Common myeloid progenitor, CD34-positive (primary cell): ENCODE measurements at regions of chr4 and their contacts with region 1.

Region 1: GRCh38 chr4:56977321-56978012 is at the start of gene NOA1:
- DNase-seq: peak; percentile 99 to 100 (median 99)
- H3K4me3 ChIP-seq: peak within 1 kb of the TSS; percentile 82 to 100 (median 93)
- H3K27ac ChIP-seq: peak within 1 kb of the TSS; percentile 88 to 93
- H3K4me1 ChIP-seq: peaks cover 8 to 42% (median 27%) of the 10 kb centered on the region in 4 experiments
- H3K27me3 ChIP-seq: no peaks in the 10 kb centered on the region

Region 2: DNA sequence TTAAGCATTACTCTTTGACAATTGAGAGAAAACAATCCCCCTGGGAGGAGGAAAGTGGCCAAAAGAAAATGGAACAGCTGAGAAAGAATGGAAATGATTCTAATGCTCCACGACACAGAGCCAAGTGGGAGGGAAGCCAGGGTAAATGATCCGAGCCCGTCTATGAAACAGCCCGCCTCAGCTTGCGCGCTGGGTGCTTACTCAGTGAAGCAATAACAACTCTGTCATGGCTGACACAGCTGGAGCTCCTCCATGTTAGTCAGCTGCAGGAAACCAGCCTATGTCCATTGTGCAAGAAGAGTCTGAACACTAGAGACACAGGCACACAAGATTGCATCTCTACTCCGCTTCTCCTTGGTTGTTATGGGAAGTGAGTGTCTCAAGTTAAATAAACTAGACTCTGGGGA is 19.4 kb before region 1 on chr4:
- CTCF ChIA-PET with region 1: interaction called, 23 read pairs
- POLR2A ChIA-PET with region 1: interaction called, 3 read pairs
- DNase-seq: peak in 2 of 3 donors; percentile 34 to 46
- H3K4me3 ChIP-seq: no peak overlapping the region
- H3K27ac ChIP-seq: no peak overlapping the region
- H3K4me1 ChIP-seq: no peaks in the 10 kb centered on the region
- H3K27me3 ChIP-seq: no peaks in the 10 kb centered on the region

Region 3: DNA sequence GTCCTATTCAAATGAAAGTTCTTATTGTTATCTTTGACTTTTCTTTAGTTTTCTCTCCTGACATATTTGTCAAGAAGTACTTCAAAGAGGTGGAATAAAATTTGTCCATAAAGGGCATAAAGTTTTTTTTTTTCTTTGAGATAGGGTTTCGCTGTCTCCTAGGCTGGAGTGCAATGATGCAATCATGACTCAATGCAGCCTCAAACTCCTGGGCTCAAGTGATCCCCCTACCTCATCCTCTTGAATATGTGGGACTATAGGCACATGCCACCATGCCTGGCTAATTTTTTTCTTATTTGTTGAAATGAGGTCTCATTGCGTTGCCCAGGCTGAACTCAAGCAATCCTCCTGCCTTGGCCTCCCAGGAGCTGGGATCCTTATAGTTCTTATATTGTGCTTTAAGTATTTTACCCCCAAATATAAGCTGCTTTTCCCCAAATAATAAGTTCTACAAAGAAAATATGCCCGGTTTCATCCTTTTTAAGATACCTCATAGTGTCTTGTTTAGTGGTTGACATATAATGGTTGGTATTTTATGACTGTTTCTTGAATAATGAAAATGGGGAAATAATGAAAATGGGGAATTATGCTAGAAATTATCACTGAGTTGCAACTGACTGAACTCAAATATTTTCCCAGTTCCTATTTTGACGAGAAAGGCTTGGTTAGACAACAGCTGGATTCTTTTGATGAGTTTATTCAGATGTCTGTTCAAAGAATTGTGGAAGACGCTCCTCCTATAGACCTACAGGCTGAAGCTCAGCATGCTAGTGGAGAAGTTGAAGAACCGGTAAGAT is 12.8 kb after region 1 on chr4:
- CTCF ChIA-PET with region 1: interaction called, 21 read pairs
- POLR2A ChIA-PET with region 1: interaction called, 4 read pairs
- DNase-seq: no peak
- H3K4me3 ChIP-seq: no peak overlapping the region
- H3K27ac ChIP-seq: no peak overlapping the region
- H3K4me1 ChIP-seq: peaks cover 0 to 8% (median 0%) of the 10 kb centered on the region in 4 experiments
- H3K27me3 ChIP-seq: no peaks in the 10 kb centered on the region